K562 (cell line): ENCODE measurements at regions of chr4 and their contacts with region 1.

Region 1: DNA sequence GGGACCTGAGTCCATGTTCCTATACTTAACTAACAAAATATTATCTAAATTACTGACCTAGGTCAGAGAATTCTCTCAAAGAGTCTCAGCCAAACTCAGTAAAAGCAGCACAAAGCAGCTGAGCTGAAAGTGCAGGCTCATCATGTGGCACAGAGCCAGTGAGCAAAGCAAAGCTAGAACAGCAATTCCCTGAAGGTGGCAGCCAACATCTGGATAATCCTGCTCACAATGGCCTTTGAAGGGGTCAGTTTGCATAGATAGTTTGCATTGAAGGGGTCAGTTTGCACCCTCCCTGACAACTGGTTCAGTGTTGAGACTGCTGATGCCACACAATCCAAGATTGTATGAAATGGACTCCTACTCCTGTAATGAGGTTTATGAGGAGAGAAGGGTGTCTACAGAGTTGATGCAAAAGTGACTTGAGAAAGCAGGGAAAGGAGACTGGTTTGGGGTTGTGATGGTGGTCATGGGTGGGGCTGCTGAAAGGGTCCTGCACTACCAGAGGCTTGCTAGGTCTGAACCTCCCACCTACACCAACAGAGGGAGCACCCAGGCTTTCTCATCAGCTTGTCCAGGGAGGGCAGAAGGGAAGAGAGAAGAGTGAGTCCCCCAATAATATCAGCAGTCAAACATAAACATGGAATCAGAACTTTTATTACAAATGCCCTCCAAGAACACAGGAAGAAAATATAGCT is 39.7 kb downstream of the TRIM61 start:
- DNase-seq: peak in 1 of 4 experiments; percentile 12
- ATAC-seq: peak; percentile 58; the same call in 2 of the 3 replicates
- H3K4me3 ChIP-seq: no peak overlapping the region
- H3K27ac ChIP-seq: no peak overlapping the region
- H3K4me1 ChIP-seq: no peaks in the 10 kb centered on the region
- H3K27me3 ChIP-seq: peaks cover 0 to 13% of the 10 kb centered on the region in 2 experiments; a peak in 3 of 5 replicates
- CTCF ChIP-seq: 0 out of 6 replicates have a peak, but pooled peaks of 1 of the 3 experiments have one; percentile 14
- EP300 ChIP-seq: no peak
- POLR2A ChIP-seq: no peak
- RAD21 ChIP-seq: no peak

Region 2: DNA sequence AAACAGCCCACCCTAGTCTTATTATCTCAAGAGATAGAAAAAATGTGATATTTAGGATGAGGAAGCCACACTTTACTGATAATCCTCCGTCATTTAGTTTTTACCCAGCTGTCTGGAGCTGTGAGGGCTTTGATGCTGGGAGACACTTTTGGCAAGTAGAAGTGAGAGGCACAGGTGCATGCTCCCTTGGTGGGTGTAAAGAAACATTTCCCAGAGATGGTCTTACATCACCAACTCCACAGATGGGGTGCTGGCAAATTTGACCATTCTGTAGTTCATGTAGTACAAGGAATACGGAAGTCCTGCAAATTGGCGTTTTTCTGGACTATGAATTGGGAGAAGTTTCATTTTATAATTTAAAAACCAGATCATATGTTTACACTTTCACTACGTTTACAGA is 11.3 kb after region 1 on chr4:
- CTCF ChIA-PET with region 1: no interaction called
- POLR2A ChIA-PET with region 1: interaction called, 4 read pairs
- in situ Hi-C with region 1: no loop called
- intact Hi-C with region 1: loop called (anchors 1 kb)
- DNase-seq: no peak
- ATAC-seq: no peak
- H3K4me3 ChIP-seq: no peak overlapping the region
- H3K27ac ChIP-seq: no peak overlapping the region
- H3K4me1 ChIP-seq: no peaks in the 10 kb centered on the region
- H3K27me3 ChIP-seq: peaks cover 0 to 14% of the 10 kb centered on the region in 2 experiments; a peak in 2 of 5 replicates
- CTCF ChIP-seq: no peak
- EP300 ChIP-seq: no peak
- POLR2A ChIP-seq: no peak
- RAD21 ChIP-seq: no peak

Region 3: GRCh38 chr4:164997324-164997723 is 59.6 kb after region 1 on chr4:
- CTCF ChIA-PET with region 1: no interaction called
- POLR2A ChIA-PET with region 1: no interaction called
- in situ Hi-C with region 1: no loop called
- intact Hi-C with region 1: loop called (anchors 5 kb)
- DNase-seq: peak in 2 of 4 experiments; percentile 14 to 53
- ATAC-seq: peak; percentile 57
- H3K4me3 ChIP-seq: no peak overlapping the region
- H3K27ac ChIP-seq: no peak overlapping the region
- H3K4me1 ChIP-seq: no peaks in the 10 kb centered on the region
- H3K27me3 ChIP-seq: peaks cover 4 to 11% of the 10 kb centered on the region in 2 experiments; a peak in 3 of 5 replicates
- CTCF ChIP-seq: peak; percentile 41 to 60 (median 49); a peak in 4 of 6 replicates
- EP300 ChIP-seq: no peak
- POLR2A ChIP-seq: no peak
- RAD21 ChIP-seq: peak; percentile 30 to 54; a peak in 3 of 4 replicates